Stomach (tissue), 19 donors: ENCODE measurements at regions of chr3 and their contacts with region 1.

Region 1: GRCh38 chr3:48435774-48436476 is 4.0 kb downstream of the CCDC51 start:
- DNase-seq: peak; percentile 91 to 96
- H3K4me3 ChIP-seq: no peak overlapping the region
- H3K27ac ChIP-seq: peak overlapping the region in 4 of 5 donors; percentile 59 to 96 (median 62)
- H3K4me1 ChIP-seq: peaks cover 23 to 54% (median 28%) of the 10 kb centered on the region in 4 donors
- H3K27me3 ChIP-seq: no peaks in the 10 kb centered on the region
- CTCF ChIP-seq: peak in 6 of 7 experiments; percentile 88 to 100 (median 98)
- EP300 ChIP-seq: no peak
- POLR2A ChIP-seq: no peak

Region 2: DNA sequence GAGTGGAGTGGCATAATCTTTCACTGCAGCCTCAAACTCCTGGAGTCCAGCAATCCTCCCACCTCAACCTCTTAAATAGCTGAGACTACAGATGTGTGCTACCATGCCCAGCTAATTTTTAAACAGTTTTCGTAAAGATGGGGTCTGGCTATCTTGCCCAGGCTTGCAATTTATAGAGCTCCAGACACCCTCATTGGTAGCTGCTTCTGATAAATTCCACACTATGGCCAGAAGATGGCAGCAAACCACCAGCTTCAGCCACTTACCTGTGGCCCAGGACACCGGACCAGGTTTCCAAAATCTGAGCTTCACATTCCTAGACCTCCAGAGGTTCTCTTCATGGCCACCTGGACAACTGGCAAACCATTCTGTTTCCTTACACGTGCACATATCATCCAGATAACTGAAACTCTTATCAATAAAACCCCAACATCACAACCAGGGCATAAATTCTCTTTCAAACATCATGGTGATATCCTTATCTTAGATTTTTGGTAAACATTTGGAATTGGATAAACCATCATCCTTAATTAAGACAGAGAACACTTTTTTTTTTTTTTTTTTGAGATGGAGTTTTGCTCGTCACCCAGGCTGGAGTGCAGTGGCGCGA is 35.0 kb before region 1 on chr3:
- intact Hi-C with region 1: loop called (anchors 2 kb)
- DNase-seq: peak; percentile 69 to 89
- H3K4me3 ChIP-seq: no peak overlapping the region
- H3K27ac ChIP-seq: peak overlapping the region in 4 of 5 donors; percentile 57 to 87 (median 78)
- H3K4me1 ChIP-seq: peaks cover 0 to 21% (median 16%) of the 10 kb centered on the region in 4 donors
- H3K27me3 ChIP-seq: peaks cover 0 to 4% (median 0%) of the 10 kb centered on the region in 3 donors
- CTCF ChIP-seq: peak in 5 of 7 experiments; percentile 64 to 91 (median 79)
- EP300 ChIP-seq: no peak
- POLR2A ChIP-seq: no peak